Panc1 (cell line): ENCODE measurements at regions of chr5 and their contacts with region 1.

Region 1: DNA sequence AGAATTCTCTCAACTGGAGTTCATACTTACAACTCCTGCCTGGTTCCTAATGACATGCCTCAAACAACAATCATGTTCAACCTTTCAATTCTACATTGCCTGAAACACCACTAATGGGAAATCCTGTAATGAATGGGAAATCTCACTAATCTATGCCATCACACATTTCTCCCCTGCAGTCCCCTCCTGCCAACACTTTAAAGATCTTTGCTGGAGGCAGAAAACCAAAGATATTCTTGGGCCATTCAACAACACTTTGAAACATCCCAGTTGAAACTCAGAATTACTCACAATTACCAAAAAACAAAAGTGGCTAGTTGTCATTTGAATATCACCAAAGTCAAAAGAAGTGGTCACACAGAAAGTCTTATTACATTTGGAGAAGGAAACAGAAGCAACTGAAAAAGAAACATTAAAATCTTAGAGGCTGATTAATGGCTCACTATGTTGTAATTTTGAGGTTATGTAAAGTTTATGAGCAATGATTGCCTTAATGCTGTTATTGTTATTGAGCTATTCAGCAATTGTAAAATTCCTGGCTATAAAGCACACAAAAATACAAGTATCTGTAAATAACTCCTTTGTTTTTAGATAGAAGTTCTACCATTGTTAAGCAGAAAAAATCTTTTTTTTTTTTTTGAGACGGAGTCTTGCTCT is 313.4 kb upstream of the SLC30A5 start:
- DNase-seq: no peak
- ATAC-seq: no peak
- H3K4me3 ChIP-seq: no peak overlapping the region
- H3K27ac ChIP-seq: no peak overlapping the region
- H3K4me1 ChIP-seq: no peaks in the 10 kb centered on the region
- H3K27me3 ChIP-seq: no peaks in the 10 kb centered on the region
- CTCF ChIP-seq: no peak

Region 2: GRCh38 chr5:68795190-68795589 is 14.8 kb after region 1 on chr5:
- CTCF ChIA-PET with region 1: interaction called, 10 read pairs
- POLR2A ChIA-PET with region 1: no interaction called
- in situ Hi-C with region 1: no loop called
- intact Hi-C with region 1: no loop called
- DNase-seq: no peak
- ATAC-seq: no peak
- H3K4me3 ChIP-seq: no peak overlapping the region
- H3K27ac ChIP-seq: no peak overlapping the region
- H3K4me1 ChIP-seq: no peaks in the 10 kb centered on the region
- H3K27me3 ChIP-seq: no peaks in the 10 kb centered on the region
- CTCF ChIP-seq: no peak

Region 3: DNA sequence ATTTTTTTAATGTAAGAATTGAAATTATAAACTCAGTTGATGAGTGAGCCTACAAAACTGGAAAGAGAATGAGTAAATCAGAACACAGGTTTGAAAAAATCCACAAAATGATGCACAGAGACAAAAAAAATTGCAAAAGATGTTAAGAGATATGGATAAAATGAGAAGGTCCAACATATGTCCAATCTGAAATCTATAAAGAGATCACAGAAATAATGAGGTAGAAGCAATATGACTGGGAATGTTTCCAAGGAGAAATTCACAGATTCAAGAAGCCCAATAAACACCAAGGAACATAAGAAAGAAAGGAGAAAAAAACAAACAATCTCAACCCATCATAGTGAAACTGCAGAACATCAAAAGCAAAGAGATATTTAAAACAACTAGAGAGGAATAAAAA is 25.0 kb after region 1 on chr5:
- CTCF ChIA-PET with region 1: no interaction called
- POLR2A ChIA-PET with region 1: no interaction called
- in situ Hi-C with region 1: no loop called
- intact Hi-C with region 1: no loop called
- DNase-seq: no peak
- ATAC-seq: no peak
- H3K4me3 ChIP-seq: no peak overlapping the region
- H3K27ac ChIP-seq: no peak overlapping the region
- H3K4me1 ChIP-seq: no peaks in the 10 kb centered on the region
- H3K27me3 ChIP-seq: no peaks in the 10 kb centered on the region
- CTCF ChIP-seq: no peak

Region 4: GRCh38 chr5:68848091-68848490 is 67.7 kb after region 1 on chr5:
- CTCF ChIA-PET with region 1: no interaction called
- POLR2A ChIA-PET with region 1: no interaction called
- in situ Hi-C with region 1: no loop called
- intact Hi-C with region 1: no loop called
- DNase-seq: no peak
- ATAC-seq: no peak
- H3K4me3 ChIP-seq: no peak overlapping the region
- H3K27ac ChIP-seq: no peak overlapping the region
- H3K4me1 ChIP-seq: no peaks in the 10 kb centered on the region
- H3K27me3 ChIP-seq: peaks cover 2% of the 10 kb centered on the region; the same call in 1 of the 2 replicates
- CTCF ChIP-seq: no peak